T-cell (primary cell): ENCODE measurements at regions of chr1 and their contacts with region 1.

Region 1: DNA sequence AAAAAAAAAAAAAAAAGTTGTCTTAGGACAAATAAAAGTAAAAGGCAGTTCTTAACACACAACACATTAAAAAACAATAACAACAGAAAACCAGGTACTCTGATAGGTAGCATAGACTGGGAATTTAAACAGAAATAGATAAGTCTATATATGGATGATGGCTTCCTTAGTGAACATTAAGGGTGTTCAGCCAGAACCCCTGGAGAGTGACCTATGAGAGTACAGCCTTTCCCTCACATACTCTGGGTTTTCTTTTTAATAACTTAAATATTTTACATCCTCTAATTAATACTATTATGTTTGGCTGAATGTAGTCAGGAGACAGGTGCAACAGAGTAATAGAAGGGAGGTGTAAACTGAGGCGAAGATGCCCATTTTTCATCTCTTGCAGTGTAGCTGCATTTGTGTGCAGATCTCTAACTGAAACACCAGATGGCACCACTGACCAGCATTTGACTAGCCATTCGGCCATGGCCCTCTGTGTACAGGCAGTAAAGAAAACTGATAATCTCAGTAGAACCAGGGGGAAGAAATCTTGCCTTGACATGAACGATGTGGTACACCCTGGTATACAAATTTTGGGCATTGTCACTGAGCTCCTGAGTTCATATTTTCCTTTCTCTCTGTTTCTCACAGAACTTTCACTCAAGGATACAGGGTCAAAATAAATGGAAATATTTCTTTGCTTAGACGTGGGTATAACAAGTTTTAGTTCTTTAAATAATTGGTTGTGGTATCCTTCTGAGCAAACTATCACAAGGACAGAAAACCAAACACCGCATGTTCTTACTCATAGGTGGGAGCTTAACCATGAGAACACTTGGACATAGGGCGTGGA is 7.6 kb downstream of the TTF2 start:
- DNase-seq: peak in 15 of 35 experiments; percentile 9 to 54 (median 21)
- ATAC-seq: peak; percentile 70 to 77 (median 70)
- H3K4me3 ChIP-seq: no peak overlapping the region
- H3K4me3 Mint-ChIP-seq: no peak overlapping the region
- H3K27ac ChIP-seq: no peak overlapping the region
- H3K27ac Mint-ChIP-seq: no peak overlapping the region
- H3K4me1 ChIP-seq: no peaks in the 10 kb centered on the region
- H3K4me1 Mint-ChIP-seq: peaks cover 10 to 32% (median 15%) of the 10 kb centered on the region in 3 donors
- H3K27me3 ChIP-seq: no peaks in the 10 kb centered on the region
- H3K27me3 Mint-ChIP-seq: no peaks in the 10 kb centered on the region

Region 2: DNA sequence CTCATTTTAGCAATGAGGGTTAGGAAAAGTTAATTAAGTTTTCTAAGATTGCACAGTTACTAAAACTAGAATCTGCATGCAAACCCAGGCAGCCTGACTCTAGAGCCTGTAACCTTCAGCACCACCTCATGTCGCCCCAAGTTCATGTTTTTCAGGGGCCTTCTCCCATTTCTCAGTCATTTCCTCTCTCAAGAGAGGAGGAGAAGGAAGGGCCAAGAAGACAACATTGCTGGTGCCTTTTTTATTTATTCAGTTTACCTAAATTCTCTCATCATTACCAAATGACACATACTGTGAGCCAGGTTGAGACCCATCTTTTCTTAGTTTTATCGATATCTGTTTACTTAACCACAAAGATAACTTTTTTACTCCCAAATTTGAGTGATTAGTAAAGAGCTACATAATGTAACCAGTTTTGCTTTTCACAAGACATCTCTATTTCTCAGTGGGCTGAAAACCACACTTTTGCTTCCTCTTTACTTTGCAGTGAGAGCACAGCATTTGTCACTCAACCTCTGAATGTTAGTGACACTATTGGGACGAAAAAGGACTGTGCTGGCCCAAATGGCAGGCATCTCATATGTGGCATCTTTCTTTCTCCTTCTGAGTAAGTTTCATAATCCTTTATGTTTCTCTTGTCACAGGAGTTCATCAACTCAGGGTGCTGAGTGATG is 66.4 kb before region 1 on chr1 and contains the start of gene CD101:
- CTCF ChIA-PET with region 1: no interaction called
- POLR2A ChIA-PET with region 1: interaction called in 1 of 2 experiments, 11 read pairs
- DNase-seq: no peak
- ATAC-seq: peak; percentile 71 to 79 (median 78)
- H3K4me3 ChIP-seq: peak within 1 kb of the TSS in 1 of 2 donors; percentile 3
- H3K4me3 Mint-ChIP-seq: peak within 1 kb of the TSS; percentile 34 to 67 (median 54)
- H3K27ac ChIP-seq: peak within 1 kb of the TSS; percentile 63
- H3K27ac Mint-ChIP-seq: peak within 1 kb of the TSS; percentile 90 to 93
- H3K4me1 ChIP-seq: peaks cover 6 to 45% of the 10 kb centered on the region in 2 experiments
- H3K4me1 Mint-ChIP-seq: peaks cover 57 to 67% (median 58%) of the 10 kb centered on the region in 3 donors
- H3K27me3 ChIP-seq: no peaks in the 10 kb centered on the region
- H3K27me3 Mint-ChIP-seq: no peaks in the 10 kb centered on the region
- total RNA-seq, gene CD101: 4.8 to 13.4 (median 5.3) TPM

Region 3: DNA sequence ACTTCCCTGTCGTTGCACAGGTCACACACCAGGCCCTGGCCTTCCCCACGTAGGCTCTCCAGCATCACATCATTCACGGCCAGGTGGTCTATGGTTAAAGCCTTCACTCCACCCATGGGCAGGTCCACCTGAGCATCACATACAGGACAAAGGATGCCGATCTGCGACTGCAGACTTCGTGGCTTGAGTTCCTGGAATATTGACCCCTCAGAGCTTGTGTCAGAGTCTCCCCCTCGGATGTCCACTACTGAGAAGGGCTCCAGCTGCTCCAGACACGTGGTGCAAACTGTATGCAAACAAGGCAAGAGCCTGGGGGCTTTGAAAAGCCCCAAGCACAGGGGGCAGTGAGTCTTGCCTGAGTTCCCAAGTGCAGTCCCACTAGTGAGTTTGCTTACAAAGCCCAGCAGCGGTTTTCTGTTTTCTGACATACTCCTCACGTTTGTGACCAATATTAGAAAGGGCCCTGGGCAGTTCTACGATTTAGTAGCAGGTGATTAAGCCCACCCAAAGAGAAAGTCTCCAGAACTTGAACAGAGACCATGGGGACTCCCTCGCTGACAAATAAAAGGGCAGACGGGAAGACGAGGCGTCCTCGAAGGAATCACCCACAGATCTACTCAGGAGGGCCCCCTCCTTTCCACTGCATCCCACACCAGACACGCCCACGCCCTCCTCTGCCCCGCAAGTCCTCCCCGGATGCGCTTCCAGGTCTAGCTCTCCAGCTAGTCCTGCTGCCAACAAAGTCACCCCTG is 53.2 kb after region 1 on chr1:
- CTCF ChIA-PET with region 1: interaction called, 7 to 10 read pairs
- POLR2A ChIA-PET with region 1: no interaction called
- DNase-seq: peak in 1 of 35 experiments; percentile 2
- ATAC-seq: no peak
- H3K4me3 ChIP-seq: peak overlapping the region; percentile 46 to 88
- H3K4me3 Mint-ChIP-seq: peak overlapping the region; percentile 80 to 83 (median 80)
- H3K27ac ChIP-seq: no peak overlapping the region
- H3K27ac Mint-ChIP-seq: no peak overlapping the region
- H3K4me1 ChIP-seq: peaks cover 0 to 15% of the 10 kb centered on the region in 2 experiments
- H3K4me1 Mint-ChIP-seq: peaks cover 6% of the 10 kb centered on the region in 3 donors
- H3K27me3 ChIP-seq: peaks cover 0 to 12% of the 10 kb centered on the region in 2 experiments
- H3K27me3 Mint-ChIP-seq: peaks cover 0 to 3% of the 10 kb centered on the region in 2 donors

Region 4: GRCh38 chr1:117128323-117129079 is 60.7 kb after region 1 on chr1:
- CTCF ChIA-PET with region 1: interaction called, 4 to 41 read pairs
- POLR2A ChIA-PET with region 1: interaction called in 1 of 2 experiments, 5 read pairs
- DNase-seq: peak in 1 of 35 experiments; percentile 52
- ATAC-seq: peak in 2 of 4 experiments; percentile 32 to 57
- H3K4me3 ChIP-seq: no peak overlapping the region
- H3K4me3 Mint-ChIP-seq: no peak overlapping the region
- H3K27ac ChIP-seq: no peak overlapping the region
- H3K27ac Mint-ChIP-seq: no peak overlapping the region
- H3K4me1 ChIP-seq: no peaks in the 10 kb centered on the region
- H3K4me1 Mint-ChIP-seq: peaks cover 0 to 2% (median 2%) of the 10 kb centered on the region in 3 donors
- H3K27me3 ChIP-seq: peaks cover 0 to 8% of the 10 kb centered on the region in 2 experiments
- H3K27me3 Mint-ChIP-seq: peaks cover 0 to 8% of the 10 kb centered on the region in 2 donors

Region 5: GRCh38 chr1:117290890-117291289 is 223.1 kb after region 1 on chr1:
- CTCF ChIA-PET with region 1: no interaction called
- POLR2A ChIA-PET with region 1: no interaction called
- DNase-seq: no peak
- ATAC-seq: no peak
- H3K4me3 ChIP-seq: no peak overlapping the region
- H3K4me3 Mint-ChIP-seq: no peak overlapping the region
- H3K27ac ChIP-seq: no peak overlapping the region
- H3K27ac Mint-ChIP-seq: no peak overlapping the region
- H3K4me1 ChIP-seq: no peaks in the 10 kb centered on the region
- H3K4me1 Mint-ChIP-seq: no peaks in the 10 kb centered on the region
- H3K27me3 ChIP-seq: no peaks in the 10 kb centered on the region
- H3K27me3 Mint-ChIP-seq: peaks cover 1 to 3% of the 10 kb centered on the region in 2 donors

Region 6: DNA sequence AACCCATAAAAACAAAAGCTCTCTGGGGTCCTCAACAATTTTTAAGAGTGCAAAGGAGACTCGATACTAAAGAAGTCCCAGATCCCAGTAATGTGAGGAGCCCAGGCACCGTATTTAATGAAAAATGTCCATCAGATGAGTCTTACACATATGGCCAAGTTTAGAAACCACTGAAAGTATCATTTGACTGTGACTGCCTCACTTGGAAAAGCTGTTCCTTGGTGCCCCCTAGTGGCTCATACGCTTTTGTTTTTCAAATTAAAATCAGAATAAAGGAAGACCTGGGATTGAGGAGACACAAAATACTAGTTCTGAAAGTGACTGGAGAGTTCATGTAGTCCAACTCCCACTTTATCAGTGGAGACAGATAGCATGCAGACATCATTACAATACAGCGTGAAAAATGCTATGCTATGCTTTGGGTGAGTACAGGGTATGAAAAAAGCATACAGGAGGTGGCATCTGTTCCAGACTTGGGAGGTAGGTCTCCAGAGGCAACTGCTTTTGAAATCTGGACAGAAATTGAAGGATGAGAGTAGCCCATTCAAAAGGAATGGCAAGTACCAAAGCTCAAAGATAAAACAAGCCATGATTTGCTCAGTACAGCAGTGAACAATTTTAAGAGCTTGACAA is 827.8 kb after region 1 on chr1:
- CTCF ChIA-PET with region 1: interaction called in 1 of 2 experiments, 10 read pairs
- POLR2A ChIA-PET with region 1: no interaction called
- DNase-seq: peak in 31 of 35 experiments; percentile 7 to 72 (median 44)
- ATAC-seq: peak in 1 of 4 experiments; percentile 48
- H3K4me3 ChIP-seq: no peak overlapping the region
- H3K4me3 Mint-ChIP-seq: no peak overlapping the region
- H3K27ac ChIP-seq: no peak overlapping the region
- H3K27ac Mint-ChIP-seq: no peak overlapping the region
- H3K4me1 ChIP-seq: no peaks in the 10 kb centered on the region
- H3K4me1 Mint-ChIP-seq: peaks cover 2 to 5% (median 2%) of the 10 kb centered on the region in 3 donors
- H3K27me3 ChIP-seq: no peaks in the 10 kb centered on the region
- H3K27me3 Mint-ChIP-seq: no peaks in the 10 kb centered on the region